ENCODE measurements at regions of chr16 and their contacts with region 1.

Region 1: GRCh38 chr16:31073968-31074813 is at the starts of genes ZNF646 and ZNF668:
- DNase-seq: peak; percentile 98
- H3K4me3 Mint-ChIP-seq: peak within 1 kb of the TSS; percentile 99
- H3K27ac Mint-ChIP-seq: peak within 1 kb of the TSS; percentile 96
- H3K4me1 Mint-ChIP-seq: peaks cover 35% of the 10 kb centered on the region
- H3K27me3 Mint-ChIP-seq: no peaks in the 10 kb centered on the region
- total RNA-seq, gene ZNF646: 25.3 and 26.1 TPM in 2 replicates
- total RNA-seq, gene ZNF668: 14.9 and 15.1 TPM in 2 replicates

Region 2: GRCh38 chr16:30052671-30053372 is 1021.4 kb before region 1 on chr16:
- intact Hi-C with region 1: no loop called
- DNase-seq: peak; percentile 89
- H3K4me3 Mint-ChIP-seq: peak overlapping the region; percentile 87
- H3K27ac Mint-ChIP-seq: peak overlapping the region; percentile 82
- H3K4me1 Mint-ChIP-seq: peaks cover 28% of the 10 kb centered on the region
- H3K27me3 Mint-ChIP-seq: no peaks in the 10 kb centered on the region

Region 3: GRCh38 chr16:30761928-30762810 is 312.0 kb before region 1 on chr16 and contains the starts of genes CFAP119 and RNF40:
- intact Hi-C with region 1: loop called (anchors 5 kb)
- DNase-seq: peak; percentile 95
- H3K4me3 Mint-ChIP-seq: peak within 1 kb of the TSS; percentile 93
- H3K27ac Mint-ChIP-seq: peak within 1 kb of the TSS; percentile 82
- H3K4me1 Mint-ChIP-seq: peaks cover 28% of the 10 kb centered on the region
- H3K27me3 Mint-ChIP-seq: no peaks in the 10 kb centered on the region
- total RNA-seq, gene CFAP119: 4.4 and 5.6 TPM in 2 replicates
- total RNA-seq, gene RNF40: 98.2 and 98.5 TPM in 2 replicates

Region 4: DNA sequence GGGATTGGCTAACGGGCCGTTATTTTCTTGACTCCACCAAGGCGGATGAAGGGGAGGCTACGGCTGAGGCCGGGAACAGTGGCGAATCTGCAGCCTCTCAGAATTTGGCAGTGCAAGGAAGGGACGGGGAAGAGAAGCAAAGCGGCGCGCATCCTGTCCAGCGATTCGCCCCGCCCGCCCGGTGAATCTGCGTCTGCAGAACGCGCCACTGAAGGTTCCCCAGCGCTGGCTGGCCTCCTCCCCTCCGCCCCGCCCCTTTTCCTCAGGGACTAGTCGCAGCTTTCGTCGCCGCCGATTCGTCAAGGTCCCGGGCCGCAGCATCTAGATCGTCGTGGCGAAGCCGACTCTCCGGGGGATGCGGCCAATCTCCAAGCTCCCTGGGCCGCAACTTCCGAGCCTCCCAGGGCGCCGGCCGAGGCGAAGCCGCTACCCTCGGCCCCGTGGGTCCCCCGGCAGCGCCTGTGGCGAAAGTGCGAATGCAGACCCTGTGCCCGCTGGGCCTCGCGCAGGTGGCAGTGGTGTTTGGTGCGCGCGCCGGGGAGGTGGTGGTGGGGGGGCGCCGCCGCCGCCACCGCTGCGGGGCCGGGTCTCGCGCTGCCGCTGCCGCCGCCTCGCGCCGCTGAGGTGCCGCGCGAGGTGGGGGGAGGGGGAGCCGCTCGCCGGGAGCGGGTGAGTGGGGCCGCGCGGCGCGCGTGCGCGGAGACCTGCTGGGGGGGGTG is 116.6 kb before region 1 on chr16 and contains the start of gene SETD1A:
- intact Hi-C with region 1: loop called (anchors 1 kb)
- DNase-seq: peak; percentile 93
- H3K4me3 Mint-ChIP-seq: peak within 1 kb of the TSS; percentile 96
- H3K27ac Mint-ChIP-seq: peak within 1 kb of the TSS; percentile 97
- H3K4me1 Mint-ChIP-seq: peaks cover 28% of the 10 kb centered on the region
- H3K27me3 Mint-ChIP-seq: no peaks in the 10 kb centered on the region
- total RNA-seq, gene SETD1A: 34.0 and 38.8 TPM in 2 replicates

Region 5: DNA sequence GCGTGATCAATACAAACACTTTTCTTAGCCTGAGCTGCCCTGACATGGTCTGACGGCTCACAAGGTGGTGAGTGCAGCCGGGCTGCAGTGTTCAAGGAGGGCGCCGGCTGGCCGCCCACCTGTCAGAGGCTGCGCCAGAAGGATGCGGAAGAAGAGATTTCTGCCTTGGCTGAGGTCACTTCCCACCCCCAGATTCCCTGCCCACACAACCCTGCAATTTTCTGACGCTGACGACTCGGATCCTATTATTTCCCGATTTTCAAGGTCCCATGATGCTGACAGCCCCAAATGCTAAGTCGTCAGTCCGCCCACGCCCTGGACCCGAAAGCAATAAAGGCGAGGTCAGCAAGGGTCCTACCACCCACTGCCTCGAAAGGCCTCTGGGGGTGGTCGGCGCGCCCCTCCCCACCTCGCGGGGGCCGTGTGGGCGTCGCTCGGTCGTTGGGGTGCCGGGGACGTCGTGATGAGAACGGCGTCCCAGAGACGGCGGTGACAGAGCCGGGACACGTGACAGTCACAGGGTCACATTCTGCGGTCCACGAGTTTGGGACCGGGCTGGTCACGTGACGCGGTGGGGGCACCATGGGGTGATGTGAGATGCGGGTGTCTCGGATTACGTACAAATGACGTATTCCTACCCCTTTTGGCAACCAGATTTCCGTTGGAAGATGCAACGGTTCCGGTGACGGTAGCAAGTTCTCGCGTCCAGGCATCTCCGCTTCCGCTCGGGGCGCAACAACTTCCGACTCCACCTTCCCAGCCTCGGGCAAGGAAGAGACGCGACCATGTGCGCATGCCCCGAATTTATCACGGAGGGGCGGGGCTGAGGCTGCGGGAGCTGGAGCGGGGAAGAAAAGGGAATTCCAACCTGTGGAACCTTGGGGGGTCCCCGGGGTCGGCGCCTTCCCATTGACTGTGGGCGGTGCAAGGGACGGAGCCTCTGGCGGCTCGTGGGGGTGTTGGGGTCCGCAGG is 41.2 kb before region 1 on chr16 and contains the start of gene STX4:
- intact Hi-C with region 1: loop called (anchors 1 kb)
- DNase-seq: peak; percentile 97
- H3K4me3 Mint-ChIP-seq: peak within 1 kb of the TSS; percentile 95
- H3K27ac Mint-ChIP-seq: peak within 1 kb of the TSS; percentile 92
- H3K4me1 Mint-ChIP-seq: peaks cover 24% of the 10 kb centered on the region
- H3K27me3 Mint-ChIP-seq: no peaks in the 10 kb centered on the region
- total RNA-seq, gene STX4: 56.4 and 58.7 TPM in 2 replicates

Region 6: GRCh38 chr16:31108035-31108793 is 34.0 kb after region 1 on chr16 and contains the start of gene BCKDK:
- intact Hi-C with region 1: loop called (anchors 2 kb)
- DNase-seq: peak; percentile 69
- H3K4me3 Mint-ChIP-seq: peak within 1 kb of the TSS; percentile 84
- H3K27ac Mint-ChIP-seq: peak within 1 kb of the TSS; percentile 86
- H3K4me1 Mint-ChIP-seq: peaks cover 22% of the 10 kb centered on the region
- H3K27me3 Mint-ChIP-seq: no peaks in the 10 kb centered on the region
- total RNA-seq, gene BCKDK: 43.6 and 44.8 TPM in 2 replicates

Region 7: DNA sequence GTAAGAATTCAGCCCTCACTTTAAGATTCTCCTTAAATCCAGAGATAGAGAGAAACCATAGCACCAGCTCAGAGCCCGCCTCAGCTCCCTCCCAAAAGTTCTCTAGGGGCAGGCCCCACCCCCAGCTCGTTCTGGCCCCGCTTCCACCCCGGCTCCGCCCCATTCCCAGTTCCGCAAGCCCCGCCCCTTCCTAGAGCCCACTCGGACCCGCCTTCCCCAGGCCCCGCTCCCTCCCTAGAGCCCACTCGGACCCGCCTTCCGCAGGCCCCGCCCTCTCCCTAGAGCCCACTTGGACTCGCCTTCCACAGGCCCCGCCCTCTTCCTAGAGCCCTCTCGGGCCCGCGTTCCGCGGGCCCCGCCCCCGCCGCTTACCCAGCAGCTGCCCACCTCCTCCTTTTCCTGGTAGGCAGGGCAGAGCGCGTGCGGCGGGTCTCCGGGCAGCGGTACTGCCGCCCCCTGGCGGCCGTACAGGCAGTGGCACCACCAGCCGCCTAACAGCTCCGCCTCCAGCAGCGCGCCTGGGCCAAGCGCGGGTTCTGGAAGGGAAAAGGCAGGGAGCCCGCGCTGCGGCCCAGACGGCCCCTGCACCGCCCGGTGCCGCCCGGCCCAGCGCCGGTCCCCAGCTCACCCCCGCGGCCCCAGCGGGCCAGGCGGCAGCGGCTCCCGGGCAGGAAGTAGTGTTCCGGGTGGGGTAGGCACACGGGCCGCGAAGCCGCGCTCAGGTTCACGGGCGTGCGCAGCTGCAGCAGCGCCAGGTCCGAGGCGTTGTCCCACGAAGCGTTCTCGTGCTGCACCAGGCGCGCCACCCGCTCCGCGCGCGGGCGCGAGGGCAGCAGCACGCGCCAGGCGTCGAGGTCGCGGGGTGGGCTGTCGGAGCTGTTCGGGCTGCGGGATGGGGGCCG is 68.2 kb after region 1 on chr16:
- intact Hi-C with region 1: loop called (anchors 1 kb)
- DNase-seq: peak; percentile 98
- H3K4me3 Mint-ChIP-seq: peak overlapping the region; percentile 78
- H3K27ac Mint-ChIP-seq: peak overlapping the region; percentile 88
- H3K4me1 Mint-ChIP-seq: peaks cover 12% of the 10 kb centered on the region
- H3K27me3 Mint-ChIP-seq: peaks cover 13% of the 10 kb centered on the region

Region 8: DNA sequence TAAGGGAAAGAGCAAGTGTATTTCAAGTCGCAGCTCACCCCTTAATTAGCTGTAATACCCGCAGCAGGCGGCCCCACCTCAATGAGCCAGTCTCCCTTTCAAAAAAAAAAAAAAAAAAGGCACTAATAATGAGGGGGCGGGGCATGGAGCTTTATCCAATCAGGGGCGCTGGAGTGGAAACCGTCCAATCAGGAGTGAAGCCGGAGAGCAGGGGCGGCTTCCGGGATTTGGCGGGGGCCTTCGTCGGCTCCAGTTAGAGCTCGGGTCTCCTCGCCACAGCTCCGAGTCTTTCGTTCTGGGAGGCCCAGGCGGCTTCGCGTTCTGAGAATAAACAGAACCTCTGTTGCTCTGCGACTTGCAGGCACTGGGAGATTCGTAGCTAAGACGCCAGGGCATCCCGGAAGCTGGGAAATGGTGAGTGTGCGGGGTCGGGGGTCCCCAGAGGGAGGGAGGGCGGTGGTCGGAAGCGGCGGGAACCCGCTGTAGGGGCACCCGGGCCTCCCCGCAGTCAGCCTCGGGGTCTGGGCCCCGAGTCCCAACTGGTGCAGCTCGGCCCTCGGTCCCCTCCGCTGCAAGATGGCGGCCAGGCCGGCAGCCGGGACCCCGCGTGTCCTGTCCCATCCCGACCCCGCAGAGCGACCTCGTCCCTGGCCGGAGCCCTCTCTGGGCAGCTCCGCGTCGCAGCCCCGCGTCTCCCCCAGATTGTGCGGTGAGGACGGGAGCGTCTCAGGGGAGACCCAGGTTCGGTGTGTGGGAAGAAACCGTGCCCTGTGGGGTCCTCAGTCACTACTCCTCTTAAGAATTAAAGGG is 799.6 kb after region 1 on chr16 and contains the start of gene ZNF267:
- intact Hi-C with region 1: loop called (anchors 1 kb)
- DNase-seq: peak; percentile 90
- H3K4me3 Mint-ChIP-seq: peak within 1 kb of the TSS; percentile 96
- H3K27ac Mint-ChIP-seq: peak within 1 kb of the TSS; percentile 94
- H3K4me1 Mint-ChIP-seq: peaks cover 84% of the 10 kb centered on the region
- H3K27me3 Mint-ChIP-seq: no peaks in the 10 kb centered on the region
- total RNA-seq, gene ZNF267: 93.9 and 98.9 TPM in 2 replicates